ENCODE measurements at regions of chr5 and their contacts with region 1.

Region 1: DNA sequence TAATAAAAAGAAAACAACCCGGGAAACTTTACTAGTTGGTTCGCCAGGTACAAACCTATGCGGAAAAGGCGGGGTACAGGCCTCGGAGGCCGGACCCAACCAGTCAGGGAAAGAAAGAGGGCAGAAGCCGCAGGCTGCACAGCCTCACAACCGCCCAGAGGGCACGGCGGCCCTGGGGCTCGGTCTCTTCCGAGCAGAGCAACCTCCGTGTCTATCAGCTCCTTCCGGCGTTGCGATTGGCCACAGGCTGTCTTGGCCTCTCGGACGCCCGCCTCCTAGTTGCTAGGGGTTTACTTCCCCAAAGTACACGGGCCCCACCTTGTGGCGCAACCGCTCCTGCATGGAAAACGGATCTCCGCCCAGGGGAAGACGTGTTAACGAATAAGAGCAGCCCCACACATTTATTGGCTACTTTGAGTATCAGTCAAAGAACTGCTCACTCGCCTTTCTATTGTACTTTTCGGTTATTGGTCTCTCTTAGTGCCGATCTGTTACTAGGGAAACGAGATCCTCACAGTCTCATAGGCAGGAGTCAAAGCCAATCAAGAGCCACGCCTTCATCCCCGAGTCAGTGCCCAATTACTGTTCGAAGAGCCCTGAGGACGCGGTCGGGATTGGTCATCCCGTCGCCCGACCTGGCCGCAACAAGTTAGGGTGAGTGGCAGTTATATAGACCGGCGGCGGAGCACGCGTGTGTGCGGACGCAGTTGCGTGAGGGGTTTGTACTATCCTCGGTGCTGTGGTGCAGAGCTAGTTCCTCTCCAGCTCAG is at the start of gene G3BP1:
- DNase-seq: peak; percentile 98 to 100
- H3K4me3 ChIP-seq: peak within 1 kb of the TSS; percentile 79 to 99 (median 98)
- H3K27ac ChIP-seq: peak within 1 kb of the TSS; percentile 90
- H3K4me1 ChIP-seq: peaks cover 1 to 11% (median 5%) of the 10 kb centered on the region in 4 experiments; a peak in 5 of 7 replicates
- H3K27me3 ChIP-seq: no peaks in the 10 kb centered on the region
- CTCF ChIP-seq: peak; percentile 23 to 68 (median 27); a peak in 3 of 4 replicates
- EP300 ChIP-seq: no peak
- POLR2A ChIP-seq: peak; percentile 94 to 98
- RAD21 ChIP-seq: peak; percentile 56 to 57
- total RNA-seq, gene G3BP1: 516 and 529 TPM in 2 replicates

Region 2: DNA sequence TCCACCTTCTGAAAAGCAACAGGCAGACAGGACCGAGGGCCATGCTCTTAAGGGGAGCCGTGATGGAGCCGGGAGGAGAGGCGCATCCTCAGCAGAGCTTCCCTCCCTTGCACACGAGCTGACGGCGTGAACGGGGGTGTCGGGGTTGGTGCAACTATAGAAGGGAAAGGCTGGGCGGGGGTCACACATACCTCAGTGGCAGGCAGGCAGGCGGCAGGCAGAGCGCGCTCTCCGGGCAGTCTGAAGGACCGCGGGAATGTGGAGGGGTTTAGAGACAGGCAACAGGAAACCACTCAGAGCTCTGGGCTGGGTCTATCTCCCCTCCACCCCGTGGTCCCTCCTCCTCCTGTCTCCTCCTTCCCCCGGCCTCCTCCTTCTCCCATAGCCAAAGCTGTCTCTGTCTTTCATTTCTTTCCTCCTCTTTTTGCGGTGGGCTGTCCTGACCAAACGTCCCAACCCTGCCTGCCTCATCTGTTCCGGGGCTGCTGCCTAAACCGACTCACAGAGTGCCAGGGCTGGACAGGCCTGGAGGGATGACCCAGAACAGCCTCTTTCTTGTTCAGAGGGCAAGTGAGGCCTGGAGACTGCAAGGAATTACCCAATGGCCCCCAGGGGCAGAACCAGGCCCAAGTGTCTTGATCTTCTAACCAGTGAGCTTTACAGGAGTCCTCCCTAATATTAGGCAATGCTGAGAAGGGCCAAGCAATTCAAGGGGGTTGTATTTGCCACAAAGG is 84.6 kb before region 1 on chr5 and contains the start of gene SPARC:
- CTCF ChIA-PET with region 1: interaction called, 991 read pairs
- POLR2A ChIA-PET with region 1: interaction called, 11 read pairs
- DNase-seq: peak; percentile 56 to 77
- H3K4me3 ChIP-seq: peak within 1 kb of the TSS; percentile 64 to 79 (median 72)
- H3K27ac ChIP-seq: no peak within 1 kb of the TSS
- H3K4me1 ChIP-seq: peaks cover 3 to 23% (median 15%) of the 10 kb centered on the region in 4 experiments
- H3K27me3 ChIP-seq: no peaks in the 10 kb centered on the region
- CTCF ChIP-seq: no peak
- EP300 ChIP-seq: no peak
- POLR2A ChIP-seq: peak; percentile 27 to 94
- RAD21 ChIP-seq: no peak; a peak in 1 of 4 replicates
- total RNA-seq, gene SPARC: 438 and 452 TPM in 2 replicates

Region 3: DNA sequence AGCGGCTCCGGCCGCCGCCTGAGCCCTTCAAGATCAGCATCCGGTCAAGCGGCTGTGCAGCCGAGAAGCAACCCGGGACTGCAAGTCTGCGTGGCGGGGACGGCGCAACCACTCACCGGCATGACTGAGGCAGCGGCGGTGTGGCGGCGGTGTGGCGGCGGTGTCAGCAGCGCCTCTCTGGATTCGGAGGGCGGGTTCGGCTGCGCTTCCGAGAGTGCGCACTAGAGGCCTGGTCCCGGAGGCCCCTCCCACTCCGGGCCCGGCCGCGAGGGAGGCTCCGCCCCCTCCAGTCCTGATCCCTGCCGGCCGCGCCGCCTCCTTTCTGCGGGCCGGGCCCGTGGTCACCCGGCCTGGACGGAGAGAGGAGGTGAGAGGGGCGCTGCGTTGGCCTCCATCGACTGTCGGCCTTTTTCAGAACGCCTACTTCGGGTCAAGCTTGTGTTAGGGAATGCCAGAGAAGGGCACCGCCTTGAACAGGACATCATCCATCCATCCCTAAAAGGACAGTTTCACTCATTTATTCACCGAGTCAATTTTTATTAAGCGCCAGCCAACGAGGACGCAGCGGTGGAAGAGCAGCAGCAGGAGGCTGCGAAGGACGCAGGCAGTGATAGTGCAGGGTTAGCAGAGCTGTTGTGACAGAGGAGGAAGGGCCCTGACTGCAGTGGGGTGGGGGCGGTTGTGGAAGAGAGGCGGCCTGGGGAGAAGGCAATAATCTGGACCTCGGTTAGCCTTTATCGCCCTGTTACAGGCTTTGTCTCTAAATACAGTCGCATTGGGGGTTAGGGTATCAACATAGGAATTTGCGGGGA is 12.8 kb before region 1 on chr5 and contains the start of gene ATOX1:
- CTCF ChIA-PET with region 1: interaction called, 12 read pairs
- POLR2A ChIA-PET with region 1: interaction called, 182 read pairs
- DNase-seq: peak in 1 of 2 experiments; percentile 94
- H3K4me3 ChIP-seq: peak within 1 kb of the TSS; percentile 61 to 90 (median 72)
- H3K27ac ChIP-seq: peak within 1 kb of the TSS; percentile 28; the same call in 1 of the 2 replicates
- H3K4me1 ChIP-seq: peaks cover 5 to 14% (median 7%) of the 10 kb centered on the region in 4 experiments
- H3K27me3 ChIP-seq: no peaks in the 10 kb centered on the region
- CTCF ChIP-seq: no peak
- EP300 ChIP-seq: no peak
- POLR2A ChIP-seq: peak; percentile 77 to 93
- RAD21 ChIP-seq: no peak
- total RNA-seq, gene ATOX1: 77.9 and 79.9 TPM in 2 replicates

Region 4: GRCh38 chr5:151786468-151786867 is 15.0 kb after region 1 on chr5:
- CTCF ChIA-PET with region 1: interaction called, 3 read pairs
- POLR2A ChIA-PET with region 1: interaction called, 85 read pairs
- DNase-seq: no peak
- H3K4me3 ChIP-seq: no peak overlapping the region
- H3K27ac ChIP-seq: no peak overlapping the region
- H3K4me1 ChIP-seq: peaks cover 0 to 4% (median 2%) of the 10 kb centered on the region in 4 experiments; a peak in 1 of 7 replicates
- H3K27me3 ChIP-seq: no peaks in the 10 kb centered on the region
- CTCF ChIP-seq: no peak
- EP300 ChIP-seq: no peak
- POLR2A ChIP-seq: no peak
- RAD21 ChIP-seq: no peak

Region 5: GRCh38 chr5:151799407-151799806 is 28.0 kb after region 1 on chr5:
- CTCF ChIA-PET with region 1: no interaction called
- POLR2A ChIA-PET with region 1: interaction called, 50 read pairs
- DNase-seq: no peak
- H3K4me3 ChIP-seq: no peak overlapping the region
- H3K27ac ChIP-seq: no peak overlapping the region
- H3K4me1 ChIP-seq: no peaks in the 10 kb centered on the region
- H3K27me3 ChIP-seq: no peaks in the 10 kb centered on the region
- CTCF ChIP-seq: no peak
- EP300 ChIP-seq: no peak
- POLR2A ChIP-seq: no peak
- RAD21 ChIP-seq: no peak

Region 6: DNA sequence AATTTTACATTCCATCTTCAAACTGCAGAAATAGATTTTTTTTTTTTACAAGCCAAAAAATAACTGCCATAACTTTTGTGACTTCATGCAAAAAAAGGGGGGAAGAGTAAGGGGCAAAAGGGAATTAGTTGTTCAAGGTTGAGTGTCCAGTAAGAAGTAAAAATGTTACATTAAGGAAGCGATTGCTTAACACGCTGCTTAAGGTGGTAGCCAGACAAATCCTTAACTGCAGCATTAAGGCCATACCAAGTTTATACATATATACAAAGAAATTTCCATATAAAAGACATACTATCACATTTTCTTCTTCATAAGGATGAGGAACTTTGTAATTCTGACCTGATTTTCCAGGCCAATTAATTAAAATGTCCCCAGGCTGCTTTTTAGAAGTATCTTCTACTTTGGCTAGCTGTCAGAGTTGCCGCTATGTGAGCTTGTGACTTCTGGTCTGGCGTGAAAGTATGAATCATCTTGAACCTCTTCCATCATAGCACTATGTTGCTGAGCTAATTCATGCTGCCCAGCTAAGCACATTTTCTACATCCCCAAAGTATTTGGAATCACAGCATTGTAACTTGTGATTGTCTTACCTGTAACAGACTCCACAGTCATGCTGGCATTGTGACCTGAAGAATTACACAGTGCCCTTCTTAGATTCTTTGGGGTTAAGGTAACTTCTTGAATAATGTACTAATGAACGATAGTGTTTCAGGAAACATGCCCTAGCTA is 40.3 kb after region 1 on chr5:
- CTCF ChIA-PET with region 1: interaction called, 4 read pairs
- POLR2A ChIA-PET with region 1: interaction called, 40 read pairs
- DNase-seq: no peak
- H3K4me3 ChIP-seq: no peak overlapping the region
- H3K27ac ChIP-seq: no peak overlapping the region
- H3K4me1 ChIP-seq: peaks cover 0 to 3% (median 0%) of the 10 kb centered on the region in 4 experiments; a peak in 1 of 7 replicates
- H3K27me3 ChIP-seq: no peaks in the 10 kb centered on the region
- CTCF ChIP-seq: no peak
- EP300 ChIP-seq: no peak
- POLR2A ChIP-seq: no peak
- RAD21 ChIP-seq: no peak

Region 7: GRCh38 chr5:151880324-151880723 is 108.9 kb after region 1 on chr5:
- CTCF ChIA-PET with region 1: no interaction called
- POLR2A ChIA-PET with region 1: no interaction called
- DNase-seq: no peak
- H3K4me3 ChIP-seq: no peak overlapping the region
- H3K27ac ChIP-seq: no peak overlapping the region
- H3K4me1 ChIP-seq: no peaks in the 10 kb centered on the region
- H3K27me3 ChIP-seq: peaks cover 3 to 17% (median 5%) of the 10 kb centered on the region in 4 experiments; a peak in 5 of 7 replicates
- CTCF ChIP-seq: no peak
- EP300 ChIP-seq: no peak
- POLR2A ChIP-seq: no peak
- RAD21 ChIP-seq: no peak